ENCODE measurements at regions of chr1 and their contacts with region 1.

Region 1: GRCh38 chr1:235866913-235867845 is 473 bp upstream of the LYST start:
- DNase-seq: peak; percentile 84
- ATAC-seq: peak; percentile 92
- H3K4me3 ChIP-seq: peak overlapping the region; percentile 66 to 69
- H3K27ac ChIP-seq: peak overlapping the region; percentile 46
- H3K4me1 ChIP-seq: peaks cover 9 to 20% of the 10 kb centered on the region in 2 experiments; a peak in 2 of 4 replicates
- H3K27me3 ChIP-seq: no peaks in the 10 kb centered on the region
- CTCF ChIP-seq: no peak
- POLR2A ChIP-seq: no peak
- RAD21 ChIP-seq: no peak

Region 2: GRCh38 chr1:235910357-235911299 is 43.4 kb after region 1 on chr1:
- CTCF ChIA-PET with region 1: no interaction called
- POLR2A ChIA-PET with region 1: no interaction called
- RAD21 ChIA-PET with region 1: no interaction called
- intact Hi-C with region 1: loop called (anchors 5 kb)
- DNase-seq: peak; percentile 93
- ATAC-seq: peak; percentile 93
- H3K4me3 ChIP-seq: peak overlapping the region; percentile 4 to 24; a peak in 3 of 4 replicates
- H3K27ac ChIP-seq: peak overlapping the region; percentile 84
- H3K4me1 ChIP-seq: peaks cover 28 to 60% of the 10 kb centered on the region in 2 experiments
- H3K27me3 ChIP-seq: no peaks in the 10 kb centered on the region
- CTCF ChIP-seq: no peak
- POLR2A ChIP-seq: no peak
- RAD21 ChIP-seq: peak; percentile 43

Region 3: GRCh38 chr1:235946571-235946981 is 79.4 kb after region 1 on chr1:
- CTCF ChIA-PET with region 1: interaction called, 8 read pairs
- POLR2A ChIA-PET with region 1: no interaction called
- RAD21 ChIA-PET with region 1: no interaction called
- intact Hi-C with region 1: loop called (anchors 5 kb)
- DNase-seq: no peak
- ATAC-seq: peak; percentile 84
- H3K4me3 ChIP-seq: no peak overlapping the region
- H3K27ac ChIP-seq: no peak overlapping the region
- H3K4me1 ChIP-seq: peaks cover 0 to 7% of the 10 kb centered on the region in 2 experiments; a peak in 1 of 4 replicates
- H3K27me3 ChIP-seq: no peaks in the 10 kb centered on the region
- CTCF ChIP-seq: peak in 2 of 3 experiments; percentile 45 to 58; a peak in 4 of 6 replicates
- POLR2A ChIP-seq: no peak
- RAD21 ChIP-seq: peak; percentile 76

Measured in HCT116 (cell line).